ENCODE measurements at regions of chr17 and their contacts with region 1.

Region 1: DNA sequence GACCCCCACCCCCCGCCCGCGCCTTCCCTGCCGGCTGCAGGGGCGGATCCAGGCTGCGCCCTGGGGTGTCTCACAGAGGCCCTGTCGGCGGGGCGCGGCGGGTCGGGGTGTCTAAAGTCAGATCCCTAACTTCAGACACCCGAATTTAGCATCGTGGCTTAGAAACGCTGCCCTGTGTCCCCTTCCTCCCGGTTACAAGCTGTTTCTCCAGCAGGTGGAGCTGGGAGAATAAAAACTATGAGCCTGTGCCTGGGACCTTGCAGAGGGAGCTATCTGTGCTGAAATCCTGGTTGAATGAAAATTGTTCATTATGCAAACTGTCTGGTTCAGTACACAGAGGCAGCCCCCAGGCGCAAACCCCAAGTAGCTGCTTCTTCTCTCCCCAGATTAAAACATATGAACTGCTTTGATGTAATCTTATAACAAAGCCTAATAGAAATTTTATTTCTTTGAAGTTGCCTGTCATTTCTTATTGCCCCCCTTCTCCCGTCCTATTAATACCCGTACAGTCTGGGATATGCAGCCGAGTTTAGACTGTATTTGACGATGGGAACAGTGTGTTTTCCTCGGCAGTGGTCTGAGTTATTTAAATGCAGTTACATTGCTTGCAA is 79.0 kb downstream of the RPA1 start:
- DNase-seq: peak; percentile 64
- H3K4me3 ChIP-seq: peak overlapping the region in 1 of 3 experiments; percentile 27
- H3K27ac ChIP-seq: no peak overlapping the region
- H3K4me1 ChIP-seq: peaks cover 5% of the 10 kb centered on the region
- H3K27me3 ChIP-seq: peaks cover 36 to 49% of the 10 kb centered on the region in 2 experiments
- CTCF ChIP-seq: peak; percentile 60 to 63
- POLR2A ChIP-seq: no peak

Region 2: DNA sequence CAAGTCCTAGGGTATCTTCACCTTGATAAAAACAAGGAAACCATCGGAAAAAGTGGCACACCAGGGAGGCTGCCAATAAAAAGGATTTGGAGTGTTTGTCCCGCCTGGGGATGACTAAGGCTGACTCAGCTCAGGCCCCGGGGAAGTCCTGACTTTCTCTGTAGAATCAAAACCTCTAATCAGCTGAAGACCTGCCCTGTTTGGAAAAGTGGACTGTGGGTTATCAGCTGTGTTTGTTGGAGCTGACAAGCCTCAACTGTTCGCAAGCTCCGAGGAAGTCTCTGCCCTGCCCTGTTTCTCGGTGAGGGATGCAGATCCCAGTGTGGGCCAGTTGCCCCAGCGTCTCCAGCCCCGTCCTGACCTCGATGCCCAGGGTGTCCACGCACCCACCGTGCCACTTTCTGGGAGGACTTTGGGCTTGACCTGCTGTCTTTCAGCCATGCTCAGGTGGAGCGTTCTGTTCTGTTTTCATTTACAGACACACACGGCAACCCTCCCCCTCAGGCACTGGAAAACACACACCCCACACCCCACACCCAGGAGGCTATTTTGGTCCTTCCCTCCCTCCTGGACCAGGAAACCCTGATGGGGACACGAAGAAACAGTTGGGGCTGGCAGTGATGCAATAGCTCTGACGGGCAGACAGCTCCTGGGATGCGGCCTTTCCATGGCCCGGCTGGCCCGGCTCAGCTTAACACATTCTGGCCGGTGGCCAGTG is 318.6 kb before region 1 on chr17:
- CTCF ChIA-PET with region 1: no interaction called
- POLR2A ChIA-PET with region 1: no interaction called
- dilution Hi-C with region 1: no loop called
- intact Hi-C with region 1: no loop called
- DNase-seq: peak; percentile 95
- H3K4me3 ChIP-seq: no peak overlapping the region
- H3K27ac ChIP-seq: peak overlapping the region; percentile 73
- H3K4me1 ChIP-seq: peaks cover 18% of the 10 kb centered on the region
- H3K27me3 ChIP-seq: no peaks in the 10 kb centered on the region
- CTCF ChIP-seq: no peak
- POLR2A ChIP-seq: peak; percentile 58

Region 3: DNA sequence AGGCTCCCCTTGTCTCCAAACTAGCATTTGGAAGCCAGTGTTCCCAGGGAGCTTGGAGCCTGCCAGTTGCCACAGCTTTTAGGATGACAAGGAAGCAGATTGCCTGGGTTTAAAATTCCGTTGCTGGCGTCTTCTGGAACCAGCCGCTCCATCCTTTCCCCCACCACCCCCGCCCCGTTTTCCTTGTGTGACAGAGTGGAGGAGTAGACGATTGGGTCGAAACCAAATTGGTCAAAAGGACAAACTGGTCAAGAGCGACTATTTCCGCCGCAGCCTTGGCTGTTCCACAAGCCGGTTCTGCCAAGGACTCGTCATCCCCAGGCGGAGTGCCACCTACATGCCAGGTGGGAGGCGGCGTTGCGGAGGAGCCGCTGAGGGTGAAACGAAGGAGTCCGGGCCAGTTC is 12.1 kb after region 1 on chr17:
- CTCF ChIA-PET with region 1: interaction called, 22 read pairs
- POLR2A ChIA-PET with region 1: no interaction called
- dilution Hi-C with region 1: no loop called
- intact Hi-C with region 1: no loop called
- DNase-seq: no peak
- H3K4me3 ChIP-seq: no peak overlapping the region
- H3K27ac ChIP-seq: no peak overlapping the region
- H3K4me1 ChIP-seq: no peaks in the 10 kb centered on the region
- H3K27me3 ChIP-seq: no peaks in the 10 kb centered on the region
- CTCF ChIP-seq: no peak
- POLR2A ChIP-seq: no peak

Region 4: DNA sequence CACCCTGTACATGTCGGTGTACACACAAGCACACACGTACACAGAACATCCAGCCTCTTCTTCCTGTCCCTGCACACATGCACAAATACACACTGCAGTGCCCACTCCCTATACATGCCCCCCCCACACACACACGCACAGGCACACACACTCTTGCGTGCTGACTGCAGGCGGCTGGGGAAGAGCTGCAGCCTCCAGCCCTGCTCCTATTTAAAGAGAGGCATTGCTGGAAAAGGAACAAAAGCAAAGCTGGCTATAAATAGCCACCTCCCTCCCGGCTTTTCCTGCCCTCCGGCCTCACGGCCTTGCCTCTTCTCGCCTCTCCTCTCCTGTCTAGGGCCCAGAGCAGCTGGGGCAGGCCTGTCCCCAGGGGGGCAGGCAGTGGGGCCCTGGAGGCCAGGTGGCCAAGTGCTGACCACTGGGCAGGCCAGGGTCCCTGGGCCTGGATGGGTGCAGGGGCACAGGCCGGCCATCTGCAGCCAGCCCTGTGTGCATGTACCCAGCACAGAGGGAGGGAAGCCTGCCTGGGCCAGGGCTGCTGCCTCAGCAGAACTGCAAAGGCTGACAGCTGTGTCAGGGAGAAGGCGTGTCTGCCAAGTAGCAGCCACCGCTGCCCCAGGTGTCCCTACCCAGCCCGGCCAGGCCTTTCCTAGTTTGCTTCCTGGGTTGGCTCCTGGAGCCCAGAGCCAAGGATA is 90.9 kb after region 1 on chr17:
- CTCF ChIA-PET with region 1: interaction called, 11 read pairs
- POLR2A ChIA-PET with region 1: no interaction called
- dilution Hi-C with region 1: no loop called
- intact Hi-C with region 1: no loop called
- DNase-seq: peak; percentile 27
- H3K4me3 ChIP-seq: no peak overlapping the region
- H3K27ac ChIP-seq: no peak overlapping the region
- H3K4me1 ChIP-seq: peaks cover 4% of the 10 kb centered on the region
- H3K27me3 ChIP-seq: peaks cover 12 to 15% of the 10 kb centered on the region in 2 experiments
- CTCF ChIP-seq: no peak
- POLR2A ChIP-seq: no peak

Region 5: GRCh38 chr17:2018716-2019510 is 110.1 kb after region 1 on chr17:
- CTCF ChIA-PET with region 1: interaction called, 270 read pairs
- POLR2A ChIA-PET with region 1: no interaction called
- dilution Hi-C with region 1: no loop called
- intact Hi-C with region 1: no loop called
- DNase-seq: no peak
- H3K4me3 ChIP-seq: no peak overlapping the region
- H3K27ac ChIP-seq: no peak overlapping the region
- H3K4me1 ChIP-seq: peaks cover 10% of the 10 kb centered on the region
- H3K27me3 ChIP-seq: peaks cover 8 to 20% of the 10 kb centered on the region in 2 experiments
- CTCF ChIP-seq: no peak
- POLR2A ChIP-seq: no peak

Region 6: GRCh38 chr17:2029911-2030778 is 121.3 kb after region 1 on chr17 and contains the start of gene DPH1:
- CTCF ChIA-PET with region 1: interaction called, 270 read pairs
- POLR2A ChIA-PET with region 1: no interaction called
- dilution Hi-C with region 1: no loop called
- intact Hi-C with region 1: loop called (anchors 1 kb)
- DNase-seq: peak; percentile 88
- H3K4me3 ChIP-seq: peak within 1 kb of the TSS; percentile 81 to 97 (median 87)
- H3K27ac ChIP-seq: peak within 1 kb of the TSS; percentile 16
- H3K4me1 ChIP-seq: peaks cover 7% of the 10 kb centered on the region
- H3K27me3 ChIP-seq: peaks cover 15 to 16% of the 10 kb centered on the region in 2 experiments
- CTCF ChIP-seq: no peak
- POLR2A ChIP-seq: peak; percentile 69
- total RNA-seq, gene DPH1: 37.8 and 38.5 TPM in 2 replicates

Region 7: DNA sequence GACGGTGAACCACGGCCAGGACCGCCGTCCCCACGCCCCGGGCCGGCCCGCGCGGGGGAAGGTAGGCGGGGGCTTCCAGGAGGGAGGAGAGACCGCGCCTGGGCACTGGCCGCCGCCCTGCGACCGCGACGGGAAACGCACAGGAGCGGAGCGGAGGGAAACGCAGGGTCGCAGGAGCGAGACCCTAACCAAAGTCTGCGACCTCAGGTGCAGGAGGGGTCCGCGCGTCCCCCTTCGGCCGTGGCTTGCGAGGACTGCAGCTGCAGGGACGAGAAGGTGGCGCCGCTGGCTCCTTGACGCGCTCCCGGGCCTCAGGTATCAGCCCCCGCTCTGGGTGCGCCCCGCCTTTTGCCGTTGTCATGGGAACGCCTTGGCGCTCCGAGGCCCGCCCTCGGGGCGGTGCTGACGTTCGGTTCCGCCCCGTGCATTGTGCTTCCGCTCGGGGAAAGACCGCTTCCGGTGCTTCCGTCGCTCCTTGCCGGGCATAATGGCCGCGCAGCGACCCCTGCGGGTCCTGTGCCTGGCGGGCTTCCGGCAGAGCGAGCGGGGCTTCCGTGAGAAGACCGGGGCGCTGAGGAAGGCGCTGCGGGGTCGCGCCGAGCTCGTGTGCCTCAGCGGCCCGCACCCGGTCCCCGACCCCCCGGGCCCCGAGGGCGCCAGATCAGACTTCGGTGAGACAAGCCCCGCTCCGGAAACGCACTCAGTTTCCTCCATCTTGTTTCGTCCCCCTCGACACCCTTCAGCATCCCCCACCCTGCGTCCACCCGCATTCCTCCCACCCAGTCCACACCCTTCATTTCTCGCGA is 133.0 kb after region 1 on chr17 and contains the start of gene OVCA2:
- CTCF ChIA-PET with region 1: interaction called, 20 read pairs
- POLR2A ChIA-PET with region 1: no interaction called
- dilution Hi-C with region 1: no loop called
- intact Hi-C with region 1: no loop called
- DNase-seq: peak; percentile 93
- H3K4me3 ChIP-seq: peak within 1 kb of the TSS; percentile 50 to 90 (median 80)
- H3K27ac ChIP-seq: peak within 1 kb of the TSS; percentile 80
- H3K4me1 ChIP-seq: peaks cover 7% of the 10 kb centered on the region
- H3K27me3 ChIP-seq: no peaks in the 10 kb centered on the region
- CTCF ChIP-seq: peak; percentile 45 to 60
- POLR2A ChIP-seq: peak; percentile 87
- total RNA-seq, gene OVCA2: 40.9 and 41.3 TPM in 2 replicates

Region 8: GRCh38 chr17:2282297-2282873 is 373.6 kb after region 1 on chr17:
- CTCF ChIA-PET with region 1: interaction called, 22 read pairs
- POLR2A ChIA-PET with region 1: no interaction called
- dilution Hi-C with region 1: no loop called
- intact Hi-C with region 1: no loop called
- DNase-seq: peak; percentile 71
- H3K4me3 ChIP-seq: no peak overlapping the region
- H3K27ac ChIP-seq: no peak overlapping the region
- H3K4me1 ChIP-seq: no peaks in the 10 kb centered on the region
- H3K27me3 ChIP-seq: no peaks in the 10 kb centered on the region
- CTCF ChIP-seq: peak; percentile 25 to 46
- POLR2A ChIP-seq: no peak

Region 9: DNA sequence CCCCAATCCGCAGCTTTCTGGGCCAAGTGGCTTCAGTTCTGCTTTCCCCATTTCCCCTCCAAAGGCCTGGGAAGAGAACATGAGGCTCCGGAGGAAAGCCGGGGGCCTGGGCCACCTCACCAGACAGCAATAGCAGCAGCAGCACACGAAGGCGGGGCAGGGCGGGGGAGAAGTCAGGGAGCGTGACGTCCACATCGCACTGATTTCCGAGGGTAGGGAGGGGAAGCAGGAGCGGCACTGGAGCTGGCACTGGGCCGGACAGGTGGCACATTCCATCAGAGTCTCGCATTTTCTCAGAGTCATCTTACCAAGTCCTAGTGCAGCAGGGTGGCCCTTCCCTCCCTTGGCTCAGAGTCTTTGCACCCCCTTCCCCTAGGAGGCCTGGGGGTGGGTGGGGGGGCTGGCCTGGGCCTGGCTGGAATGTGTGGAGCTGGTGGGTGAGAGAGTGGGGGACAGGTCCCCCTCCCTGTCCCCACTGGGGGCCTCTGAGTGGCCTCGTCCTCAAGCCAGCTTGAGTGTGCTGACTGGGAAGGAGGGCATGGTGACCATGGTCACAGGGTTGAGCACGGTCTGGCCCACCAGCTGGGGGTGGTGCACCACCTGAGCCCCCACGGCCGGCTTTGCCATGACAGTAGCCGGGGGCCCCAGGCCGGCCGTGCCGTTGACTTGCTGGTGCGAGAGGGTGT is 477.7 kb after region 1 on chr17:
- CTCF ChIA-PET with region 1: no interaction called
- POLR2A ChIA-PET with region 1: no interaction called
- dilution Hi-C with region 1: no loop called
- intact Hi-C with region 1: no loop called
- DNase-seq: no peak
- H3K4me3 ChIP-seq: no peak overlapping the region
- H3K27ac ChIP-seq: no peak overlapping the region
- H3K4me1 ChIP-seq: peaks cover under 1% of the 10 kb centered on the region
- H3K27me3 ChIP-seq: no peaks in the 10 kb centered on the region
- CTCF ChIP-seq: no peak
- POLR2A ChIP-seq: no peak